ENCODE measurements at regions of chr19 and their contacts with region 1.

Region 1: GRCh38 chr19:49200238-49200862 is 42.8 kb downstream of the TRPM4 start:
- DNase-seq: no peak
- H3K4me3 ChIP-seq: no peak overlapping the region
- CTCF ChIP-seq: no peak

Region 2: DNA sequence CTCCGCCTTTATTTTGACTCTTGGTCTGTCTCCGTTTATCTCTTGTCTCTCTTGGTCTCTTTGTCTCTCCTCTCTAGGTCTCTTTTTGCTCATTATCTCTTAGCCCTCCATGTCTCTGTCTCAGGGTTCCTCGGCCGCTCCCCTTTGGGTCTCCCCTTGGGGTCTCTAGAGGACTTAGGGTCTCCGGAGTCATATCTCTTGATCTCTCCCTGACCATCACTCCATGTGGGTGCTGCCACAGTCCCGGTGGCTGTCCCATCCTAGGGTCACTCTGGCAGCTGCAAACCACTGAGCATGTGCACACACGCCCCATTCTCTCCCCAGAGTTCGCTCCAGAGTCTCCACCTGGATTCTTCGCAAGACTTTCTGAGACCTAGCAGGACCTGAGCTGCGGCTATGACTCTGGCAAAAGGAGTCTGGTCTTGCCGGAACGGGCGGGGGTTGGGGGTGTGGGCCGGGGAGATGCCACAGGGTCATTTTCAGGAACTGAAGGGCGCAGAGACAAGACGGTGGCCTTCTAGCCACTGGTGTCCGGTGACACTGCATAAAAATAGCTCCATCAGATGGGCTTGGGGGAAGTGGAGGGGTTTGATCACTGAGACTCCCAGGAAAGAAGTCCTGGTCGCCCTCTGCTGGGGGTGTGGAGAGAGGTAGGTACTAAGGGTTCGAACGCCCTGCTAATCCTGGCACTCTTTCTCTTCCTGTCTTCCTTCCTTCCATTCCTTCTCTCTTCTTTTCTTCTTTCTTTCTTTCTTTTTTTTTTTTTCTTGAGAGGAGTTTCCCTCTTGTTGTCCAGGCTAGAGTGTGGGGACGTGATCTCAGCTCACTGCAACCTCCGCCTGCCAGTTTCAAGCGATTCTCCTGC is 126.6 kb before region 1 on chr19:
- CTCF ChIA-PET with region 1: interaction called, 17 read pairs
- POLR2A ChIA-PET with region 1: no interaction called
- DNase-seq: no peak
- H3K4me3 ChIP-seq: no peak overlapping the region
- CTCF ChIP-seq: peak; percentile 34

Region 3: DNA sequence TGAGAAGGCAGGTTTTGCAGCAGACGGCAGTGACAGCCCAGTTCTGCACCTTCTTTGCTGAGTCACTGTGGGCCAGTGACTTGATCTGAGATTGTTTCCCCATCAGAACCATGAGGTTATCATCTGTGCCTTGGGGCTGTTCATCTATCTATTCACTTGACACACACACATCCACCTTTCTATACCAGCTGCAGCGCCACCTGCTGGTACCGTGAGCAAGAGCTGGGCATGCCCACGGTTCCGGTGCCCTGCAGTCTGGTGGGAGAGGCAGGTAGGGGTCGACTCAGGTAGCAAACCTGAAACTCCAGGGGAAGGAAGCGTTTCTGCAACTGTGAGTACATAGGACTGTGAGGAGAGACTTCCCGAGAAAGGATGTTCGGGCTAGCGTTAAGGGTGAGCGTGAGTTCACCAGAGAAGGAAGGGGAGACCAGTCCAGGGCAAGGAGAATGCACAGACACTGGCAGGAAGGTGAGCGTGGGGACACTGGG is 93.7 kb before region 1 on chr19:
- CTCF ChIA-PET with region 1: interaction called, 17 read pairs
- POLR2A ChIA-PET with region 1: no interaction called
- DNase-seq: no peak
- H3K4me3 ChIP-seq: no peak overlapping the region
- CTCF ChIP-seq: peak; percentile 84

Region 4: GRCh38 chr19:49148784-49149651 is 51.3 kb before region 1 on chr19:
- CTCF ChIA-PET with region 1: interaction called, 17 read pairs
- POLR2A ChIA-PET with region 1: no interaction called
- DNase-seq: no peak
- H3K4me3 ChIP-seq: peak overlapping the region; percentile 95
- CTCF ChIP-seq: no peak

Region 5: DNA sequence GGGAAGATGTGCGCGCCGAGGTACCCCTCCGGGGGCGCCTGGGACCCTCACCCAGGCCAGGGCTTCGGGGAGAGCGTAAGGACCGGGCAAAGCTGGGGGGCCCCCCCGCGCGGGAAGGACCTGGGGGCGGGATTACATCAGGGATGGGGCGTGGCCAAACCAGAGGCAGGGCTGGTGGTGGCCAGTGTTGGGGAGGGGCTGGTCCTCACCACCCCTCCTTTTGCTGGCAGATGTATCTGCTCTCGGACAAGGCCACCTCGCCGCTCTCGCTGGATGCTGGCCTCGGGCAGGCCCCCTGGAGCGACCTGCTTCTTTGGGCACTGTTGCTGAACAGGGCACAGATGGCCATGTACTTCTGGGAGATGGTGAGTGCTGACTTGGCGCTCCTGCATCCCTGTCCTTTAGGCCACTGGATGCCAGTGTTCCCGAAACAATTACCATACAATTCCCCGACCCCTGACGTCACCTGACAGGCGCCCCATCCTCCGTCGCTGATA is 17.5 kb before region 1 on chr19:
- CTCF ChIA-PET with region 1: interaction called, 121 read pairs
- POLR2A ChIA-PET with region 1: no interaction called
- DNase-seq: no peak
- H3K4me3 ChIP-seq: no peak overlapping the region
- CTCF ChIP-seq: no peak